ENCODE measurements at regions of chr6 and their contacts with region 1.

Region 1: DNA sequence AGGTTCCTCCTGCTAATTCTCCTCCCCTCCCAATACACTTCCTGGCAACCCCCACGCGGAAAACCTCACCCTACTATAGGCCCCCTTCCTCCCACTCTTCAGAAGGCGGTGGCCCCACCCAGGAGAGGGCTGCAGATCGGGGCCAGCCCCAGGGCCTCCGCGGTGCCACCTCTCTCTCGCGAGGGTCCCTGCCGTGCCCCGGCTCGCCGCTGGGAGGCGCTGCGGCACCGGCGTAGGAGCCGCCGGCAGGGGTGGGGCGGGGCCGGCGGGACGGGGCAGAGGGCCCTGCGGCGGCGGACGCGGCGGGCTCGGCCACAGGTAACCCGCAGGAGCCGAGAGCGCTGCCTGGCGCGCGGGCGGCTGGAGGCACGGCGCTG is at the start of gene ANKRD6:
- DNase-seq: peak; percentile 90
- ATAC-seq: peak; percentile 96
- H3K4me3 Mint-ChIP-seq: peak within 1 kb of the TSS; percentile 67
- H3K27ac Mint-ChIP-seq: no peak within 1 kb of the TSS
- H3K4me1 Mint-ChIP-seq: peaks cover 19% of the 10 kb centered on the region
- H3K27me3 Mint-ChIP-seq: peaks cover 2% of the 10 kb centered on the region
- total RNA-seq, gene ANKRD6: 2.8 to 2.9 TPM

Region 2: GRCh38 chr6:89412071-89413005 is 20.5 kb before region 1 on chr6 and contains the start of gene RRAGD:
- CTCF ChIA-PET with region 1: interaction called, 13 read pairs
- POLR2A ChIA-PET with region 1: no interaction called
- intact Hi-C with region 1: loop called in 1 of 2 experiments (anchors 1 kb)
- DNase-seq: peak; percentile 83
- ATAC-seq: peak; percentile 80
- H3K4me3 Mint-ChIP-seq: peak within 1 kb of the TSS; percentile 83
- H3K27ac Mint-ChIP-seq: peak within 1 kb of the TSS; percentile 85
- H3K4me1 Mint-ChIP-seq: peaks cover 20% of the 10 kb centered on the region
- H3K27me3 Mint-ChIP-seq: peaks cover 3% of the 10 kb centered on the region
- total RNA-seq, gene RRAGD: 19.6 to 20.1 TPM

Region 3: DNA sequence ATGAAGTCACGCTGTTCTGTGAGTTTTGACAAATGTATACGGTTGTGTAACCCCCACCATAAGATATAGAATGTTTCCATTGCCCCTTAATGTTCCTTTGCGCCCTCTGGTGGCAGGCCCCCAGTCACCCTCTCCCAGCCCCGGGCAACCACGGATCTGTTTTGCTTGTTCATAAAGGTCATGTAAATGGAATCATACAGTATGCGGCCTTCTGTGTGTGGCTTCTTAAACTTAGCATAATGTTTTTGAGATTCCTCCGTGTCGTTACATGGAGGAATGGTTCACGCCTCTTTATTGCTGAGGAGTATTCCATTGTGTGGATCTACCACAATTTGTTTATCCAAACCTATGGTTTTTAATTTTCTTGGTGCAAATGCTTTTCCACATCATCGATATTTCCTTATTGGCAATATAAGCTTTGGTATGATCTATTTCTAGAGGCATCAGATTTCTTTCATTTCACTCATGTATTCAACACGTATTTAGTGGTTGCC is 177.3 kb after region 1 on chr6:
- CTCF ChIA-PET with region 1: interaction called, 41 read pairs
- POLR2A ChIA-PET with region 1: no interaction called
- intact Hi-C with region 1: loop called (anchors 1 kb)
- DNase-seq: peak; percentile 88
- ATAC-seq: peak; percentile 92
- H3K4me3 Mint-ChIP-seq: no peak overlapping the region
- H3K27ac Mint-ChIP-seq: no peak overlapping the region
- H3K4me1 Mint-ChIP-seq: no peaks in the 10 kb centered on the region
- H3K27me3 Mint-ChIP-seq: no peaks in the 10 kb centered on the region

Region 4: GRCh38 chr6:89819336-89820130 is 386.7 kb after region 1 on chr6 and contains the start of gene MDN1:
- CTCF ChIA-PET with region 1: no interaction called
- POLR2A ChIA-PET with region 1: no interaction called
- intact Hi-C with region 1: loop called in 1 of 2 experiments (anchors 5 kb)
- DNase-seq: peak; percentile 94
- ATAC-seq: peak; percentile 94
- H3K4me3 Mint-ChIP-seq: peak within 1 kb of the TSS; percentile 81
- H3K27ac Mint-ChIP-seq: peak within 1 kb of the TSS; percentile 96
- H3K4me1 Mint-ChIP-seq: peaks cover 22% of the 10 kb centered on the region
- H3K27me3 Mint-ChIP-seq: no peaks in the 10 kb centered on the region
- total RNA-seq, gene MDN1: 48.6 to 59.5 TPM

Region 5: GRCh38 chr6:90110971-90111370 is 678.1 kb after region 1 on chr6:
- CTCF ChIA-PET with region 1: no interaction called
- POLR2A ChIA-PET with region 1: no interaction called
- intact Hi-C with region 1: loop called in 1 of 2 experiments (anchors 5 kb)
- DNase-seq: peak; percentile 81
- ATAC-seq: peak; percentile 43
- H3K4me3 Mint-ChIP-seq: peak overlapping the region; percentile 28
- H3K27ac Mint-ChIP-seq: peak overlapping the region; percentile 72
- H3K4me1 Mint-ChIP-seq: peaks cover 81% of the 10 kb centered on the region
- H3K27me3 Mint-ChIP-seq: no peaks in the 10 kb centered on the region

Region 6: GRCh38 chr6:90296346-90297114 is 863.7 kb after region 1 on chr6 and contains the start of gene BACH2:
- CTCF ChIA-PET with region 1: no interaction called
- POLR2A ChIA-PET with region 1: no interaction called
- intact Hi-C with region 1: loop called in 1 of 2 experiments (anchors 10 kb)
- DNase-seq: peak; percentile 99
- ATAC-seq: peak; percentile 66
- H3K4me3 Mint-ChIP-seq: peak within 1 kb of the TSS; percentile 86
- H3K27ac Mint-ChIP-seq: peak within 1 kb of the TSS; percentile 100
- H3K4me1 Mint-ChIP-seq: peaks cover 49% of the 10 kb centered on the region
- H3K27me3 Mint-ChIP-seq: peaks cover 7% of the 10 kb centered on the region
- total RNA-seq, gene BACH2: 74.7 to 87.3 TPM